ENCODE measurements at regions of chr6 and their contacts with region 1.

Region 1: DNA sequence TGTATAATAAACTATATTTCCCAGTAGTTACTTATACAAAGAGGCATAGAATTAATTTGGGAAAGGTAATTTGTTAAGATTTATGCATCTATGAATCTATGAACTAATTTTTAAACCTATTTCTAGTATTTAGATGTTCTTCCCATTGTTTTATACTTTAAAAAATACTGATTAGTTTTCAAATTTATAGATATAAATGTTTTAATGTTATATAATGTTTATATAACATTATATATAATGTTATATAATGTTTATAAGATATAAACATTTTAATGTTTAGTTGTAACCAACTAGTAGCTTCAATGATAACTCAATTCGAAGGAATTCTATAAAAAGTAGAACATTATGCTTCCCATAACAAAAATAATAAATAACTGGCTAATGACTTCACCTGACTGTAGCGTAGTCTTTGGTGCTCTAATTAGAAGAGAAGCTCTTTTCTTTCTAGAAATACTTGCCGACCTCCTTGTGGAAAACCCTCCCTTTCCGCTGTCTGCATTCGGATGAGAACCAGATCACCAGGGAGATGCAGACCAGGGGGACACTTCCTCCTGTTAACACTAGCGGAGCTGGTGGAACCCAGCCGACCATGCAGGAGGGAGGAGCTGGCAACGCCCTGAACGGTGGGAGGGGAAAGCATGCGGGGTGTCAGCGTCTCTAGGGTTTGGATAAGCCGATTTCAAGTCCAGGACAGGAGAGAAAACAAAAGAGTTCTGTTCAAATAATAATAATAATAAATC is 158.4 kb downstream of the OR2B2 start:
- DNase-seq: peak; percentile 27 to 63 (median 47)
- H3K4me3 ChIP-seq: peak overlapping the region; percentile 71
- H3K4me3 Mint-ChIP-seq: peak overlapping the region; percentile 84 to 97 (median 86)
- H3K27ac ChIP-seq: peak overlapping the region; percentile 39
- H3K27ac Mint-ChIP-seq: peak overlapping the region; percentile 33 to 99 (median 76)
- H3K4me1 ChIP-seq: peaks cover 19% of the 10 kb centered on the region
- H3K4me1 Mint-ChIP-seq: peaks cover 25 to 38% (median 32%) of the 10 kb centered on the region in 3 donors
- H3K27me3 ChIP-seq: no peaks in the 10 kb centered on the region
- H3K27me3 Mint-ChIP-seq: peaks cover 0 to 10% of the 10 kb centered on the region in 2 donors

Region 2: DNA sequence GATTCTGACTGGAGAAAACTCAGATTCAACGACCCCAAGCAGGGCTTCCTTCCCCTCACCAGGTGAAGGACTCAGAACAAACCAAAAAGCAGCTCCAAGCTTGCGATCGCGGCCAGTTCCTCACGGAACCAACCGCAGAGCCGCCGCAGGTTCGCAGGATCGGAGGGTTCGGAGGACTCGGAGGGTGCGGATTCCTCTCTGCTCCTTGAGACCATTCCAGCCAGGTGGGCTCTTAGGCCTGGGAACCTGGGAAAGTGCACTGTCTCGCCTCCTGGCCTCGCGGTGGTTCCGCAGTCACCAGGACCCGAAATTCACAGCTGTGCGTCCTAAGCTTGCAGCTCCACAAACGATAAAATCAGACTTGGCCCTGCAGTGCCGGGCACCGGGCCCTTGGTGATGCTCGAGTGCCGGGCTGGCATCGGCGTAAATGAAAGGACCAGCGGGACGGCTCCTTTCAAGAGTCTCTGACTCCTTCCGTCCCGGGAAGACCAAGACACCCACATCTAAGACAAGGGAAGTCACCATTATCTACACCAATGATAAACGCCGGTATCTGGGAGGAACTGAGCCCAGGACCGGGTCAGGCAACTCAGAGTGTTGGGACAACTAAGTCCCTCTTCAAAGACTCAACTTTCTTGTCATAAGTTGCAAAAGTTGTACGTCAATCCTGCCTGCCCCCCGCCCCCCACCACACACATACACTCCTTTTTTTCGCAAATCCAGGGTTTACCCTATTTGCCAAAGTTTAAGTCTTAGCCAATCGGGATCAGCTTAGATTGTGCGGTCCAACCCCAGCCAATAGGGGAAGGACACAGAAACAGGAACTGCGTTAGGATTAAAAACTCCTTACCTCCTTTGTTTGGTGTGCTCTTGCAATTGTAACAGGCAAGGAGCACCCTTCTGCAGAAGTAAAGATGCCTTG is 576.1 kb before region 1 on chr6:
- CTCF ChIA-PET with region 1: interaction called, 16 read pairs
- POLR2A ChIA-PET with region 1: interaction called, 5 read pairs
- DNase-seq: peak; percentile 56 to 80 (median 71)
- H3K4me3 ChIP-seq: peak overlapping the region; percentile 100
- H3K4me3 Mint-ChIP-seq: peak overlapping the region; percentile 93 to 100 (median 97)
- H3K27ac ChIP-seq: peak overlapping the region; percentile 89
- H3K27ac Mint-ChIP-seq: peak overlapping the region; percentile 75 to 100 (median 92)
- H3K4me1 ChIP-seq: no peaks in the 10 kb centered on the region
- H3K4me1 Mint-ChIP-seq: peaks cover 12 to 26% (median 16%) of the 10 kb centered on the region in 3 donors
- H3K27me3 ChIP-seq: no peaks in the 10 kb centered on the region
- H3K27me3 Mint-ChIP-seq: peaks cover 3 to 18% of the 10 kb centered on the region in 2 donors

Region 3: GRCh38 chr6:27312146-27312949 is 441.5 kb before region 1 on chr6 and contains the start of gene POM121L2:
- CTCF ChIA-PET with region 1: interaction called, 10 read pairs
- POLR2A ChIA-PET with region 1: no interaction called
- DNase-seq: peak; percentile 28 to 70 (median 47)
- H3K4me3 ChIP-seq: peak within 1 kb of the TSS; percentile 69
- H3K4me3 Mint-ChIP-seq: peak within 1 kb of the TSS; percentile 72 to 90 (median 81)
- H3K27ac ChIP-seq: no peak within 1 kb of the TSS
- H3K27ac Mint-ChIP-seq: no peak within 1 kb of the TSS
- H3K4me1 ChIP-seq: peaks cover 13% of the 10 kb centered on the region
- H3K4me1 Mint-ChIP-seq: peaks cover 12 to 16% (median 14%) of the 10 kb centered on the region in 3 donors
- H3K27me3 ChIP-seq: peaks cover 26% of the 10 kb centered on the region
- H3K27me3 Mint-ChIP-seq: peaks cover 46 to 85% of the 10 kb centered on the region in 2 donors
- total RNA-seq, gene POM121L2: not detected

Region 4: DNA sequence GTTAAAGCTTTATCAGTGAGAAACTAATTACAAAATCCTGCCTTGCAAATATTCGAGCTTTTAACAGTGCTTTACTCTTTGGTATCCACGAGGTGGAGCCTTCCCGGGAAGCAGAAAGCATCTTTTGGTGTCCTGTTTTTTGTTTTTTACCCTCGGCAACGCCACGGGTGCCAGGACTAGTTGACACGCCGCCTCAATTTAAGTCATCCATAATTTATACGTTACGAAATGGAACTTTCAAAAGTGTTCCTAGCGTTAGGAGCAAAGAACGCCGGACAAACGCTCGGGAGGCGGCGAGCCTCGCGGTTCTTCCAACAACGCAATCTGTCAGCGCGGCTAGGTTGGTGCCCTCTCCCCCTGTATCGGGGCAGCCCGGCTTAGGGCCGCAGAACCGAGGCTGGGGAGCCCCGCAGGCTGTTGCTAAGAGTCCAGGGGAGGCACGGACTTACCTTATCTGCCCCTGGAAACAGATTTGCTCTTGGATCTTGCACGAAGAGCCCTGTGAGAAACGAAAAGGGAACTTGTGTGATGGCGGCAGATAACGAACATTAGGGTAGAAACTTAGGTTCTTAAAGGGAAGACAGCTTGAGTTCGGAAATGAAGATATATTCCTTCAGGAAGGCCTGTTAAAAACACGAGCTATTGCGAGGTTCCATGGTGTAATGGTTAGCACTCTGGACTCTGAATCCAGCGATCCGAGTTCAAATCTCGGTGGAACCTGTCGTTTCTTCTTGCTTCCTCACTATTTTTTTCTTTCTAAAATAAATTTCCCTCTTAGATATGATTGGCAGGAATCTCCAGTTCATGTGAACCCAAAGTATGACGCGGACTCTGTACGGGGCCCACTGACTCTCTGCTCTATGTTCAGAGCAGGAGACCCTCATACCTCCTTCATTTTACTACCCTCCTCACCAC is 234.7 kb before region 1 on chr6:
- CTCF ChIA-PET with region 1: interaction called, 31 read pairs
- POLR2A ChIA-PET with region 1: interaction called, 16 read pairs
- DNase-seq: peak; percentile 21 to 71 (median 58)
- H3K4me3 ChIP-seq: peak overlapping the region; percentile 75
- H3K4me3 Mint-ChIP-seq: peak overlapping the region; percentile 83 to 99 (median 86)
- H3K27ac ChIP-seq: peak overlapping the region; percentile 85
- H3K27ac Mint-ChIP-seq: peak overlapping the region; percentile 53 to 95 (median 77)
- H3K4me1 ChIP-seq: peaks cover 7% of the 10 kb centered on the region
- H3K4me1 Mint-ChIP-seq: peaks cover 13 to 25% (median 21%) of the 10 kb centered on the region in 3 donors
- H3K27me3 ChIP-seq: no peaks in the 10 kb centered on the region
- H3K27me3 Mint-ChIP-seq: peaks cover 12 to 28% of the 10 kb centered on the region in 2 donors

Region 5: GRCh38 chr6:27687154-27688013 is 66.5 kb before region 1 on chr6:
- CTCF ChIA-PET with region 1: interaction called, 12 read pairs
- POLR2A ChIA-PET with region 1: interaction called, 4 read pairs
- DNase-seq: peak; percentile 61 to 81 (median 66)
- H3K4me3 ChIP-seq: peak overlapping the region; percentile 70
- H3K4me3 Mint-ChIP-seq: peak overlapping the region; percentile 91 to 96 (median 94)
- H3K27ac ChIP-seq: peak overlapping the region; percentile 17
- H3K27ac Mint-ChIP-seq: peak overlapping the region; percentile 86 to 99 (median 92)
- H3K4me1 ChIP-seq: peaks cover 3% of the 10 kb centered on the region
- H3K4me1 Mint-ChIP-seq: peaks cover 25 to 39% (median 30%) of the 10 kb centered on the region in 3 donors
- H3K27me3 ChIP-seq: no peaks in the 10 kb centered on the region
- H3K27me3 Mint-ChIP-seq: peaks cover 4 to 22% of the 10 kb centered on the region in 2 donors

Region 6: DNA sequence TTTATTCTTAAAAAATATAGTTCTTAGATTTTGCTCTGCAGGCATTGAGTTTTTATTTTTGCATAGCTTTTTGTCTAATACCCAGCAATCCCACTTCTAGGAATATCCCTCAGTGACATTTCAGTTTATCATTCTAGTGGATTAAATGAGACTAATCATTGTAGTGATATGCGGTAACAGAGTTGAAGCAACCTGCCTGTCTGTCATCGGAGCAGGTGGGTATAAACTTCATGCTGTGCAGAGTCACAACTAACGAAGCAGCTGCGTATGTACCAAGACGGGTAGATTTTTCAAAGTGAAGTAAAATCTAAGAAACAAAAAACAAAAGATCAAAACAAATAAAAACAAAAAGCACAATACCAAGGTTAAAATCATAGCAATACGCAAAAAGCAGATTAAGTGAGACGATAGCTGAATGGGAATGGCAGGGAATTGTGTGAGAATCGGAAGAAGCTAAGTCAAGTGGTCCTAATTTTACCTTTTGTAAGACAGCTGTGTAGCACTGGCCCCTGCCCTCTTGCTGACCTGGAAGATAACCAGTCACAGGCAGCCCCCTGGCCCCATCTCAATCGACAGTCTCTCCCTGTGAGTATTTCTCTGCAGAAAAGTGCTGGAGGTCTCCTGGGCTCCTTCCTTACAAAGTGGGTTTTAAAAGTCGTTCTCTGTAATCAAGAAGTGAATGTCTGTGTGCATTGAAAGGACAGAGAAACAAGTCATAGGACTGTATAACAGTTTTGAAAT is 10.8 kb before region 1 on chr6:
- CTCF ChIA-PET with region 1: interaction called, 27 read pairs
- POLR2A ChIA-PET with region 1: interaction called, 3 read pairs
- DNase-seq: no peak
- H3K4me3 ChIP-seq: no peak overlapping the region
- H3K4me3 Mint-ChIP-seq: no peak overlapping the region
- H3K27ac ChIP-seq: no peak overlapping the region
- H3K27ac Mint-ChIP-seq: no peak overlapping the region
- H3K4me1 ChIP-seq: peaks cover 3% of the 10 kb centered on the region
- H3K4me1 Mint-ChIP-seq: peaks cover 8 to 10% (median 9%) of the 10 kb centered on the region in 3 donors
- H3K27me3 ChIP-seq: peaks cover 11% of the 10 kb centered on the region
- H3K27me3 Mint-ChIP-seq: peaks cover 8 to 38% of the 10 kb centered on the region in 2 donors